Activated CD8-positive, alpha-beta T cell treated with anti-CD3 and anti-CD28 coated beads for 36 hours (primary cell): ENCODE measurements at regions of chr6 and their contacts with region 1.

Region 1: DNA sequence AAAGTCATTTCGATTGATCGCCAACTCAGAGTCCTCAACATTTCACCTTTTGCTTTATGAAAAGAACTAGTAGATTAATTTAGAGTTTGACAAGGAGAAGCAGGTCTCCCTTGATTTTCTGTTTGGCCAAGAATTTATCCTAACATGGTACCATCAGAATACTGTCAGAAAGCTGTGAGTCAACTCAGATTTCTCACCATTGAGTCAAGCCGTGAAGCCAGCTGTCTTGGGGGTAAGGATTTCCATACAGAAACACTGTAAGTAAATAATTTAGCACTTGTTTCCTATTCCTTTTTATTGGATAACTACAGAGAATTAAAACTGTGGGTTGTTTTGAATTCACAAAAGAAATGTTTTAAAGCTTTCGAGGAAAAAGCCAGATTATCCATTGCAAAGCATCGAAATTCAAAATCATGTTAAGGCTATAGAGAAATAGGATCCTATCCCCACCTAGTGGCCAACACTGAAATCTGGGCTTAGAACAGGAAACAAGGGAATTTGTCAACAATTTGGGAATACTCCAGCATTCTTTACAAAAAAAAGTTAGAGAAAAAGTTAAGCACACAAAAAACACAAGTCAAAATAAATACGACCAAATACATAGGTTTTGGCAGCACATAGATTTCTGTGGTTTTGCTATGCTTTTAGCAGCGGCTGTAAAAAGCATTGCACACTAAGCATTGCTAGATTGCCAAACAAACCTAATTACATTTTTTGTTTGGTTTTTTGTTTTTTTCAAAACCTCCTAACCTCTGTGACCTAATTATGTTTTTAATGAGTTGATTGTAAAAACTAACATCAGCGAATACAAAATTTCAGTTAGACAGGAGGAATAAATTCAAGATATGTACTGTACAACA is 44.2 kb downstream of the COL11A2 start:
- DNase-seq: no peak
- ATAC-seq: no peak
- H3K4me3 Mint-ChIP-seq: no peak overlapping the region
- H3K27ac Mint-ChIP-seq: no peak overlapping the region
- H3K4me1 Mint-ChIP-seq: no peaks in the 10 kb centered on the region
- H3K27me3 Mint-ChIP-seq: peaks cover 18% of the 10 kb centered on the region
- CTCF ChIP-seq: peak; percentile 78

Region 2: DNA sequence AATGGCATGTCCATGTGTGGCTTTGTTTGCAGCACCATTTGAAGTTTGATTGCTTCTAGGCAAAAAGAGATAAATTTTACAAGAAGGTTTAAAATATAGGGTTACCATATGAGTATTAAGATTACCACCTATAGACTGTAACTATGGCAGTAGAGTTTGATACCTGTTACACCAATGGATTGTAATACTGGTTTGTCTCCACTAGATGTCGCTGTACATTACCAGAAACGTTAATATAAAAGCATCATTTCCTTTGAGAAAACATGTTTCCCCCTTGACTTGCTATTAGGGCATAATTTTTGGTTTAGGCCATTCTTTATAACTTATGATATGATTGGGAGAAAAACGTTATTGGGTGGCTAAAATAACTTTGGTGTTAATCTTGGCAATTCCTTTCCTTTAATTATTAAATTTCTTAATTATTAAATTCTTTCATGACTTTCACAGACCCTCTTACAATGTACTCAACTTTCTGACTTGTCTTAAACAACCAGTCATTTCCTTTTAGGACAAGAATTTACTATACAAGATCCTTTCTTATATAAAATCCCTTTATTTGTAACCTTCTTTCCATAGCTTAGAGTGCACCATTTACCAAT is 29.4 kb before region 1 on chr6:
- CTCF ChIA-PET with region 1: interaction called, 57 read pairs
- POLR2A ChIA-PET with region 1: no interaction called
- intact Hi-C with region 1: no loop called
- DNase-seq: no peak
- ATAC-seq: peak; percentile 53
- H3K4me3 Mint-ChIP-seq: no peak overlapping the region
- H3K27ac Mint-ChIP-seq: no peak overlapping the region
- H3K4me1 Mint-ChIP-seq: peaks cover 11% of the 10 kb centered on the region
- H3K27me3 Mint-ChIP-seq: peaks cover 36% of the 10 kb centered on the region
- CTCF ChIP-seq: peak; percentile 72

Region 3: DNA sequence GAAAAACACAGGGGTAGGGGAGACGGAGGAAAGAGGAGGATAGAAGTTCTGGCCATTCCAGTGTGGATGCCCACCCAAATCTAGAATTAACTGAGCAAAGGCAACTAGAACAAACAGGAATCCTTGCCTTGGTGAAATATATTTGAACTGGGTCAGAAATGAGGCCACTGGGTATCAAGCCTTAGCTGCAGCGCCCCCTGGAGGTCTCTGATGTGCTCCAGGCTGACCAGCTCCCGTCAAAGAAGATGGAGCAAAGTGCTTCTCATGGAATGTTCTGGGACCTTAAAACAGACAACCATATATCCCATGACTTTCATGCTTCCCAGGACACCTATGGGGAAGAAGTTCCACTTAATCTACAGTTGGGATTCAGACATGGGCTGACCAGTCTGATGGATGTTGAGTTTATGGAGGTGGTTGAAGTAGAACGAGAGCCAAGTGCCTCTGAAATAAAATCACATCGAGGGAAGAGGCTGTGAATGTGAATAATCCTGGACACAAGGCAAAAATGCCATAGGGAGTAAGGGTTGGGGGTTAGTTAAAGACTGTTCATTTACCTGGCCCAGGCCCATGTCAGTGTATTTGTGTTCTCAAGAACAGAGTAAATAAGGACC is 21.8 kb before region 1 on chr6:
- CTCF ChIA-PET with region 1: interaction called, 57 read pairs
- POLR2A ChIA-PET with region 1: no interaction called
- intact Hi-C with region 1: no loop called
- DNase-seq: peak; percentile 86
- ATAC-seq: peak; percentile 56
- H3K4me3 Mint-ChIP-seq: no peak overlapping the region
- H3K27ac Mint-ChIP-seq: no peak overlapping the region
- H3K4me1 Mint-ChIP-seq: no peaks in the 10 kb centered on the region
- H3K27me3 Mint-ChIP-seq: peaks cover 3% of the 10 kb centered on the region
- CTCF ChIP-seq: peak; percentile 71

Region 4: DNA sequence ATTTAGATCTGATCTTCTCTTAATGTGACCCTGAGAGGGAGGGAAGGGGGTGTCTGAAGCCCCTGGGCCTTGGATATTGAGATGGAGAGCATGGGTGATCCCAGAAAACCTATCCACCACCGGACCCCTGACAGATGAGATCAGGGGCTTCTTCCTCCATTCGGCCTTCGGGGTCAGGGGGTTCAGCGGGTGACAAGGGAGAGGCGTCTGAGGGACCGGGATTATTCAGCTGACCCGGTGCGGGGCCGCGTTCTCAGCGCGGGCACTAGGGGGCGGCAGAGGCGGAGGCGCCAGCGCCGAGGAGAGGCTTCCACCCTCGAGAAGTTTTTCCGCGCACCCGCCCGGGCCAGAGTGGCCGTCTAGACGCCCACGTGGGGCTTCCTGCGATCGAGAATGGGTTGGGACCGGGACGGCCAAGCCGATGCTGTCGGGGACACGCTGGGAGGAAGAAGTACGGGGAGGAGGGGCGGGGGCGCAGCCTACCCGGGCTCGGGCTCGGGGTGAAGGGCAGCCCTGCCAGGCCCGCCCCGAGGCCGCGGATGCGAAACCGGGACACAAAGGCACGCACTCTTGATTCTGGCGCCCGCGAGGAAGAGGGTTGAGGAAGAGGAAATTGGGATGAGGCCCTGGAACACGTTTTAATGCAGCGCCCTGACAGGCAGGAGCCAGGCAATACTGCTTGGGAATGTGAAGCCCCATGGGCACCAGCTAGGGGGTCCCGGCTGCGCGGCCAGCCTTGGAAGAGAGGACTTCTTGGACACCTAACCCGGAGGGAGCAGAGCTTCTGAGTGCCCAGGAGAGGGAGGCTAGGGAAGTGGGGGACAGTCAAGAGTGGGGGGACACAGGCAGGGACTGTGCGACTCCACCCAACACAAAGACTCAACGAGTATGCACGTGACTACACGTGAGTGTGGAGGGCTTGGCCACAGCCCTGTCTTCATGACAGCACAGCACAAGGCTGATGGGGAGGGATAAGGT is 13.6 kb after region 1 on chr6:
- CTCF ChIA-PET with region 1: interaction called, 31 read pairs
- POLR2A ChIA-PET with region 1: no interaction called
- intact Hi-C with region 1: no loop called
- DNase-seq: peak; percentile 83
- ATAC-seq: peak; percentile 97
- H3K4me3 Mint-ChIP-seq: peak overlapping the region; percentile 72
- H3K27ac Mint-ChIP-seq: peak overlapping the region; percentile 78
- H3K4me1 Mint-ChIP-seq: peaks cover 12% of the 10 kb centered on the region
- H3K27me3 Mint-ChIP-seq: peaks cover 2% of the 10 kb centered on the region
- CTCF ChIP-seq: peak; percentile 96